ENCODE measurements at regions of chr1 and their contacts with region 1.

Region 1: GRCh38 chr1:67307251-67308060 is at the start of gene IL12RB2:
- DNase-seq: peak; percentile 57
- H3K4me3 Mint-ChIP-seq: peak within 1 kb of the TSS; percentile 94
- H3K27ac Mint-ChIP-seq: peak within 1 kb of the TSS; percentile 95
- H3K4me1 Mint-ChIP-seq: peaks cover 69% of the 10 kb centered on the region
- H3K27me3 Mint-ChIP-seq: no peaks in the 10 kb centered on the region
- total RNA-seq, gene IL12RB2: 108 TPM in 2 replicates

Region 2: GRCh38 chr1:66929999-66930822 is 377.2 kb before region 1 on chr1:
- intact Hi-C with region 1: loop called (anchors 10 kb)
- DNase-seq: peak; percentile 93
- H3K4me3 Mint-ChIP-seq: peak overlapping the region; percentile 90
- H3K27ac Mint-ChIP-seq: peak overlapping the region; percentile 91
- H3K4me1 Mint-ChIP-seq: peaks cover 55% of the 10 kb centered on the region
- H3K27me3 Mint-ChIP-seq: no peaks in the 10 kb centered on the region

Region 3: DNA sequence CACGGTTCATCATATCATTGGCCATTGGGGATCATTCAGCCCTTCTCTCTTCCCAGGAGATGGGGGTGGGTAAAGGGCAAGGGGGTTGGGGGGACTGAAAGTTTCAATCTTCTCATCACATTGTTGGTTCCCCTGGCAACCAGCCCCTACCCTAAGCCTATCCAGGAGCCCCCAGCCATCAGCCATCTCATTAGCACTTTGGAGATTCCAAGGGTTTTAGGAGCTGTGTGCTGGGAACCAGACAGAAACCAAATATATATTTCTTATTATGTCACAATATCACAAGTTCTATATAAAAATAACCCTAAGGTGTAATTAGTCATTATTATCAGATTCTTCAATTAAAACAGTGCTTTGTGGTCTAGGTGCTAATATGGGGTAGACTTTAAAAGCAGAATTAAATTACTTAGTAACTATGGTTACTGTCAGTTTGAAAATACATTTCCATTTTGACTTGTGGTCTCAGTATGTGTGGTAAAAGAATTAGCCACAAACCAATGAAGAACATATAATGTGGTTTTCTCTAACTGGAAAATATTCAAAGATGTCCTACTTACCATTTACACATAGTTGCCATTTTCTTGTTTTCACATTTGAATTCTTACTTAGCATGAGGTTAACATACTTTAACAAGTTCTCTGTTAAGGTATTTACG is 113.1 kb before region 1 on chr1:
- intact Hi-C with region 1: no loop called
- DNase-seq: no peak
- H3K4me3 Mint-ChIP-seq: no peak overlapping the region
- H3K27ac Mint-ChIP-seq: peak overlapping the region; percentile 60
- H3K4me1 Mint-ChIP-seq: peaks cover 10% of the 10 kb centered on the region
- H3K27me3 Mint-ChIP-seq: no peaks in the 10 kb centered on the region

Region 4: DNA sequence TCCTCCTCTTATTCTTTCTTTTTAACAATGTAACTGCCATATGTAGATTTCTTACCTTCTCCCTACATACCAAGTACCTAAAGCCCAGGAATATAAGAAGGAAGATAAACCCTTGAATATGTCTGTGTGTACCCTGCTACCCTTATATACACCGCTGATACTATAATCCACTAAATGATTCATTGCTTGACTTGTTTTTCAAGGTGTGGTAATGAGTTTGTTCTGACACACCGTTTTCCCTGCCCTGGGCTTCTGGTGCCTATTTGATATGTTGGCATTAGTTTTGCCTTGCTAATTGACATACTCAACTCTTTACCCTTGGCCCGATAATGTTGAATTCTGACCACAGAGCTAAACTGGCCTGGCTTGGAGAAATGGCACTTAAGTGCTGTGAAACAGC is 76.9 kb before region 1 on chr1:
- intact Hi-C with region 1: loop called (anchors 2 kb)
- DNase-seq: no peak
- H3K4me3 Mint-ChIP-seq: no peak overlapping the region
- H3K27ac Mint-ChIP-seq: no peak overlapping the region
- H3K4me1 Mint-ChIP-seq: peaks cover 6% of the 10 kb centered on the region
- H3K27me3 Mint-ChIP-seq: no peaks in the 10 kb centered on the region

Region 5: GRCh38 chr1:67285780-67286488 is 21.5 kb before region 1 on chr1:
- intact Hi-C with region 1: loop called (anchors 1 kb)
- DNase-seq: no peak
- H3K4me3 Mint-ChIP-seq: no peak overlapping the region
- H3K27ac Mint-ChIP-seq: peak overlapping the region; percentile 78
- H3K4me1 Mint-ChIP-seq: peaks cover 27% of the 10 kb centered on the region
- H3K27me3 Mint-ChIP-seq: no peaks in the 10 kb centered on the region

Region 6: GRCh38 chr1:67332653-67333529 is 25.4 kb after region 1 on chr1:
- intact Hi-C with region 1: loop called (anchors 1 kb)
- DNase-seq: no peak
- H3K4me3 Mint-ChIP-seq: peak overlapping the region; percentile 45
- H3K27ac Mint-ChIP-seq: peak overlapping the region; percentile 91
- H3K4me1 Mint-ChIP-seq: peaks cover 68% of the 10 kb centered on the region
- H3K27me3 Mint-ChIP-seq: no peaks in the 10 kb centered on the region